GM12878 (cell line): ENCODE measurements at regions of chr2 and their contacts with region 1.

Region 1: DNA sequence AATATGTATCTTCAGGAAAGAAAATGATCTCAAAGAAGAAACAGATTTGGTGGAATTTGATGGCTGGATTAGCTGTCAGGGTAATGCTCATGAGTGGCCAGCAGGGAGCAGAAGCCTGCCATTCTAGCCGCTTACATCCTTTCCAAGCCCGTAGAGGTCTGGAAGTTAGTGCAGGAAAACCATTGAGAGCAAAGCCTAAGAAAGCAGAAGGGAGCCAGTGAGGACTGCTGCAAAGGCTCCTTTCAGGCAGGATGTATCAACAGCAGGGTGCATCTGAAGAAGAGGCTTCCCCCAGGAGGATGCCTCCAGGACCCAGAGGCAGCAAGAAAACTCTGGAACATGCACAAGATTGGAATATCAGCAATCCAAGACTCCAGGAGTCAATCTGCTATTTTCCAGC is 22.9 kb upstream of the LBH start:
- DNase-seq: no peak
- ATAC-seq: peak; percentile 82
- H3K4me3 ChIP-seq: no peak overlapping the region
- H3K27ac ChIP-seq: no peak overlapping the region
- H3K4me1 ChIP-seq: peaks cover 2% of the 10 kb centered on the region
- H3K27me3 ChIP-seq: no peaks in the 10 kb centered on the region; a peak in 1 of 4 replicates
- CTCF ChIP-seq: peak; percentile 84 to 90 (median 88)
- EP300 ChIP-seq: no peak
- POLR2A ChIP-seq: no peak
- RAD21 ChIP-seq: peak; percentile 94

Region 2: DNA sequence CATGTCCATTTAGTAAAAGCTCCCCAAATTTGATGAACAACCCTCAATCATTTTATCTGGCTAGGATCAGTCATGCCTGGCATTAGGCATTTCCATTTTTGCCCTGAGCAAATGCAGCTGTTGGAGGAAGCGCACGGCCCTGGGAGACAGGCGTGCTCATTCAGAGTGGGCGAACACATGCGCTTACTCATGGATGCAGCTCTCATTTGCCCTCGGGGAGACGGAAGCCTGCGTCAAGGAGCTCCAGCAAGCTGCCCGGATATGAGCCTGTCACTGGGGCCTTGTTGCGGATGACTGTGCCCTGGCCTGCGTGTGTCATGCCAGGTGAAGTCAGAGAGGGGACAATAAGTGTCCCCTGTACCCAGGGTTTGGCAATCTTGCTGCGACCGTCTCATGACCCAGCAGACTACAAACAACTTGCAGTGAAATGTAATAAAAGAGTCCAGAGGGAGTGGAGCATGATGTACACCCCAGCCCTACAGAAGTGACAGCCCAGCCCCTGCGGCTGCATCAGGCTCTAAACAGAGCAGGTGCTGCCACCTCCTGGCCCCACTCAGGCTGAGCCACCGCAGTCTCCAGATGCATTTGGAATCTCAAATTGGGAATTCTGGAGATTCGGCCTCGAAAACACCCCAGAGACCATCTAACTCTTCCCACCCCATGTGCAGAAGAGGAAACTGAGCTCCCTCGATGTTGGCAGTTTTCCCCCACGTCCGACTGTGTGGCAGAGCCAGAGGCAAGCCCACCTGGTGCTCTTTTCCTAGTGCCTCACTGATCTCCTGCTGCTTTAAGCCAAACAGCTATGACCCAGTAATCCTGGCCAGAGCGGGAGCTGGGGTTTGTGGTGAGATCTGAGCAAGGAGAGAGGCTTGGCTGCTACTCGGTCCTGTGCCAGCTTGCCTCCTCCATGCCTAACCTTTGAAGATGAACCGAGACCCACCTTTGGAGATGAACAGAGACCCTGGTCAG is 182.1 kb before region 1 on chr2:
- CTCF ChIA-PET with region 1: no interaction called
- POLR2A ChIA-PET with region 1: no interaction called
- RAD21 ChIA-PET with region 1: no interaction called
- SMC1A ChIA-PET with region 1: no interaction called
- in situ Hi-C with region 1: no loop called
- intact Hi-C with region 1: no loop called
- DNase-seq: no peak
- ATAC-seq: peak; percentile 70
- H3K4me3 ChIP-seq: no peak overlapping the region
- H3K27ac ChIP-seq: no peak overlapping the region
- H3K4me1 ChIP-seq: peaks cover 10% of the 10 kb centered on the region
- H3K27me3 ChIP-seq: no peaks in the 10 kb centered on the region
- CTCF ChIP-seq: peak; percentile 46 to 56 (median 56); a peak in 4 of 6 replicates
- EP300 ChIP-seq: no peak
- POLR2A ChIP-seq: no peak
- RAD21 ChIP-seq: peak; percentile 53

Region 3: DNA sequence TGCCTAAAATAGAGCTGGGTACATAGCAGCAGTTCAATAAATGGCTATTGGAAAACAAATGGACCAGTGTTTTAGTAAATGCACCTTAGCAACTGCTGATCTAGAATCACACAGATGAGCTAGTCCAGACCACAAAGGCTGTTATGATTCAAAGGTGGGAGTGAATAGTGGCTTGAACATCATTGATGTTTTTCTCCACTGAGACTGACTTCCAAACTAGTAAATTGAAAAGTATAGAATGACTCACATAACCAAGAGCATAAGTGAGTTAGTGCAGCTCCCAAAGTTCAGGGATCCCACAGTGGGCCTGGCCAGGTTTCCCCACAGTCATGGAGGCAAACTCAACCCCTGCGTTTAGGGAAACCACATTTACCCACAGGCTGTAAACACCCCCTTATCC is 168.3 kb before region 1 on chr2:
- CTCF ChIA-PET with region 1: no interaction called
- POLR2A ChIA-PET with region 1: no interaction called
- RAD21 ChIA-PET with region 1: no interaction called
- SMC1A ChIA-PET with region 1: no interaction called
- in situ Hi-C with region 1: no loop called
- intact Hi-C with region 1: no loop called
- DNase-seq: no peak
- ATAC-seq: no peak
- H3K4me3 ChIP-seq: no peak overlapping the region
- H3K27ac ChIP-seq: no peak overlapping the region
- H3K4me1 ChIP-seq: no peaks in the 10 kb centered on the region; the same call in 1 of the 2 replicates
- H3K27me3 ChIP-seq: no peaks in the 10 kb centered on the region; a peak in 1 of 4 replicates
- CTCF ChIP-seq: no peak
- EP300 ChIP-seq: no peak
- POLR2A ChIP-seq: no peak
- RAD21 ChIP-seq: no peak

Region 4: DNA sequence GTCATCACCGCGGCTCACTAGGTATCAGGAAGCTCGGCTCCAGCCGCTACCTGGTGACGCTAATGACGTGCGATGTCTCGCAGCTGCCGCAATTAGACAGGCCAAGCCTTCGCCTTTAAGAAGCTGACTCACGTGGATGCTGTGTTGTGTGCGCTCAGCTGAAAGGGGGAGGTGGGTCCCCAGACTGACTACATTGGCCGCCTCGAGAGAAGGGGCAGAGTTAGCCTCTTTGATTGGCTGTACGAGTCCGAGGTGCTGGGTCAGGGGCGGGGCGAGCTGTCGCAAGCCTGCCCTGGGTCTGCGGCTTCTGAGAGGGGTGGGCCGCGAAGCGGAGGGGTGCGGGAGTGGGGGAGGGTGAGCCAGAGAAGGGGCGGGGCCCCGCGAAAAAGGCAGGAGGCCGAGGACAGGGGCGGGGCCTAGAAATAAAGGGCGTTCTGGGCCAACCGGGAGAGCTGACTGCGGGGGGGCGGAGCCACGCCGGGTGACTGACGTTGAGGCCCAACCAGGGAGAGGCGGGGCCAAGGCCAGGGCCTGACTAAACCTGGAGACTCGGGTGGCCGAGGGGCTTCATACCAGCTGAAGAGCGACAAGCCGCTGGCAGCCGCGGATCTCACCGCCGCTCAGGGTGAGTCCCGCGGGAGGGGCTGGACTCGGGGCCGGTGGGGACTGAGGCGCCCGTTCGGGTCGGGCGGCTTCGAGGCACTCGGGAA is 61.9 kb before region 1 on chr2 and contains the start of gene YPEL5:
- CTCF ChIA-PET with region 1: interaction called, 11 read pairs
- POLR2A ChIA-PET with region 1: interaction called, 3 read pairs
- RAD21 ChIA-PET with region 1: interaction called, 10 read pairs
- SMC1A ChIA-PET with region 1: interaction called, 5 read pairs
- in situ Hi-C with region 1: no loop called
- intact Hi-C with region 1: no loop called
- DNase-seq: peak; percentile 97
- ATAC-seq: peak; percentile 96
- H3K4me3 ChIP-seq: peak within 1 kb of the TSS; percentile 78
- H3K27ac ChIP-seq: peak within 1 kb of the TSS; percentile 83
- H3K4me1 ChIP-seq: peaks cover 25% of the 10 kb centered on the region
- H3K27me3 ChIP-seq: no peaks in the 10 kb centered on the region
- CTCF ChIP-seq: no peak
- EP300 ChIP-seq: peak in 1 of 2 experiments; percentile 78; a peak in 1 of 4 replicates
- POLR2A ChIP-seq: peak; percentile 82
- RAD21 ChIP-seq: no peak
- polyA plus RNA-seq, gene YPEL5: 24.9 to 43.6 TPM

Region 5: GRCh38 chr2:30180226-30180625 is 28.2 kb before region 1 on chr2:
- CTCF ChIA-PET with region 1: no interaction called
- POLR2A ChIA-PET with region 1: no interaction called
- RAD21 ChIA-PET with region 1: no interaction called
- SMC1A ChIA-PET with region 1: no interaction called
- in situ Hi-C with region 1: no loop called
- intact Hi-C with region 1: no loop called
- DNase-seq: no peak
- ATAC-seq: no peak
- H3K4me3 ChIP-seq: no peak overlapping the region
- H3K27ac ChIP-seq: no peak overlapping the region
- H3K4me1 ChIP-seq: no peaks in the 10 kb centered on the region
- H3K27me3 ChIP-seq: no peaks in the 10 kb centered on the region; a peak in 1 of 4 replicates
- CTCF ChIP-seq: no peak
- EP300 ChIP-seq: no peak
- POLR2A ChIP-seq: no peak
- RAD21 ChIP-seq: no peak

Region 6: GRCh38 chr2:30252723-30253701 is 44.6 kb after region 1 on chr2:
- CTCF ChIA-PET with region 1: interaction called, 18 read pairs
- POLR2A ChIA-PET with region 1: no interaction called
- RAD21 ChIA-PET with region 1: interaction called, 8 read pairs
- SMC1A ChIA-PET with region 1: interaction called, 7 read pairs
- in situ Hi-C with region 1: no loop called
- intact Hi-C with region 1: no loop called
- DNase-seq: no peak
- ATAC-seq: peak; percentile 64
- H3K4me3 ChIP-seq: no peak overlapping the region
- H3K27ac ChIP-seq: no peak overlapping the region
- H3K4me1 ChIP-seq: no peaks in the 10 kb centered on the region; the same call in 1 of the 2 replicates
- H3K27me3 ChIP-seq: no peaks in the 10 kb centered on the region
- CTCF ChIP-seq: no peak
- EP300 ChIP-seq: no peak
- POLR2A ChIP-seq: no peak
- RAD21 ChIP-seq: no peak

Region 7: DNA sequence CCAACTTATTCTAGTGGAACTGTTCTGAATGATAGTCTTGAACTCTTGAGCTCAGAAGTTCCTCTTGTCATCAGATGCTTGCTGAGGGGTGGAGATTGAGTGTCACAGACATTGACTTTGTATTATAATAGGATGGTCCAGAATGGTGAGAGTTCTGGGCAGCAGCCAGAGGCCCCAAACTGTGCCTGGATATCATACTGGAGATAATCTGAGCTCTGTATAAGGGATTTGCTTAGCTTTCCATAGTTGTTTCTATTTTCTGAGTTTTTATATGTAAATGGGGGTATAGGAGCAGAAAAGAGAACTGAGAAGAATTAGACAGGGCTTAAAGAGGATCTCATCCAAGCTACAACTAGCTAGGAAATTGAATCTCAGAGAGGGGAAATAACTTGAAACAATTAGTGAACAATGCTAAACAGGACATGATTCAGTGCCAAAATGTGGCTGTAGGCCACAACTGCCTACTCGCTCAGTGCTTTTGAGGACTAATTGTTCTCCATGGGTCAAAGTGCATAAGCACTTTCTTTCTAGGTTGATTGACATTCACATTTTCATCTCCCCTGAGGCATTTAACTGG is 228.5 kb after region 1 on chr2:
- CTCF ChIA-PET with region 1: interaction called, 12 read pairs
- POLR2A ChIA-PET with region 1: no interaction called
- RAD21 ChIA-PET with region 1: interaction called, 5 read pairs
- SMC1A ChIA-PET with region 1: interaction called, 18 read pairs
- in situ Hi-C with region 1: no loop called
- intact Hi-C with region 1: no loop called
- DNase-seq: no peak
- ATAC-seq: peak; percentile 64
- H3K4me3 ChIP-seq: no peak overlapping the region
- H3K27ac ChIP-seq: no peak overlapping the region
- H3K4me1 ChIP-seq: peaks cover 2% of the 10 kb centered on the region; the same call in 1 of the 2 replicates
- H3K27me3 ChIP-seq: no peaks in the 10 kb centered on the region
- CTCF ChIP-seq: no peak
- EP300 ChIP-seq: no peak
- POLR2A ChIP-seq: no peak
- RAD21 ChIP-seq: no peak

Region 8: GRCh38 chr2:30481323-30481800 is 272.9 kb after region 1 on chr2:
- CTCF ChIA-PET with region 1: interaction called, 87 read pairs
- POLR2A ChIA-PET with region 1: no interaction called
- RAD21 ChIA-PET with region 1: interaction called, 47 read pairs
- SMC1A ChIA-PET with region 1: interaction called, 83 read pairs
- in situ Hi-C with region 1: no loop called
- intact Hi-C with region 1: no loop called
- DNase-seq: no peak
- ATAC-seq: peak; percentile 23
- H3K4me3 ChIP-seq: no peak overlapping the region
- H3K27ac ChIP-seq: no peak overlapping the region
- H3K4me1 ChIP-seq: peaks cover 8% of the 10 kb centered on the region; the same call in 1 of the 2 replicates
- H3K27me3 ChIP-seq: no peaks in the 10 kb centered on the region
- CTCF ChIP-seq: no peak
- EP300 ChIP-seq: no peak
- POLR2A ChIP-seq: no peak
- RAD21 ChIP-seq: no peak

Region 9: DNA sequence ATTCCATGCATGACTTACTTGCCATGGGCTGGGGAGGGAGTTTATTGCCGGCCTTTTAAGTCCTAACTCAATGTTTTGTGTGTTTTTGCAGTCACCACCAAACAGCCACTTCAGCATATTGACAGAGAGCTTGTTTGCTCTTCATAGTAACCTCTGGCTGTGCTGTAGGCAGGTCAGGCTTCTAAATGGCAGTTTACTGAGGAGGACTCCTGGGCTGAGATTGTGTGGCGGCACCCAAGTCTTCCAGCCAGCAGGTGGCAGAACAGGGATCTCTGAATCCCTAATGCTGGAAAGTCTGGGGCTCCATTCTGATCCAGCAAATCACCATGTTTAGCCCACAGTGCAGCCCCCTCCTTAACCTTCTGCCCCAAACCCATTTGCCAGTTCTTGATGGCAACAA is 477.5 kb after region 1 on chr2:
- CTCF ChIA-PET with region 1: interaction called, 18 read pairs
- POLR2A ChIA-PET with region 1: no interaction called
- RAD21 ChIA-PET with region 1: interaction called, 31 read pairs
- SMC1A ChIA-PET with region 1: interaction called, 10 read pairs
- in situ Hi-C with region 1: no loop called
- intact Hi-C with region 1: loop called (anchors 5 kb)
- DNase-seq: no peak
- ATAC-seq: peak; percentile 61
- H3K4me3 ChIP-seq: no peak overlapping the region
- H3K27ac ChIP-seq: no peak overlapping the region
- H3K4me1 ChIP-seq: no peaks in the 10 kb centered on the region
- H3K27me3 ChIP-seq: no peaks in the 10 kb centered on the region
- CTCF ChIP-seq: peak; percentile 30 to 35 (median 33); a peak in 5 of 6 replicates
- EP300 ChIP-seq: no peak
- POLR2A ChIP-seq: no peak
- RAD21 ChIP-seq: no peak